ENCODE measurements at regions of chr3 and their contacts with region 1.

Region 1: DNA sequence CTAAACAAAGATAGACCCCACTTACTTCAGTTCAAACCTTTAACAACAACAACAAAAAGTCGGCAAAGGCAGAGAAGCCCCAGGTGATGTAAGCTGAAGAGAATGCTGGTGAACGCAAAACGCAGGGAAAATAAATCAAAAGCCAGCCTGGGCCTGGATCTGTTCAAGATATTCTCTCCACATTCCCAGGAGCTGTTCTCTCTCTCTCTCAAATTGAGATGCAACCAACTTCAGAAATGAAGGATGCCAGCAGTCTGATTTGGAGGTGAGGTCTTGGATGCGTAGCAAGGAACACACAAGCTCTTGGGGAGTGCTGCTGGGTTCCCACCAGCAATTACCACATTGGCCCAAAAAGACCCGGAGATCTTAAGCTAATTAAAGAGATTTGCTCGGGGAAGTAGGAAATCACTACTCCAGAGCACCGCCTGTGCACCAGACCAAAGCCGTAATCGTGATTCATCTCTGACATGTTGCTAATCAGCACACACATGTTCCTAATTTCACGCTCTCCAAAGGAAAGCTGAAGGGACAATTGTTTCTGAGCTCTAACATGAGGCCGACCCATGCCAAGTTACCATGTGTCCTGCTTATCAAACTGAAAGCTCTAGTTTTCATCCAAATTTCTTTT is 37.1 kb downstream of the IL17RD start:
- DNase-seq: no peak
- ATAC-seq: no peak
- H3K4me3 ChIP-seq: no peak overlapping the region
- H3K27ac ChIP-seq: no peak overlapping the region
- H3K4me1 ChIP-seq: no peaks in the 10 kb centered on the region
- H3K27me3 ChIP-seq: no peaks in the 10 kb centered on the region
- CTCF ChIP-seq: no peak

Region 2: GRCh38 chr3:57116501-57116900 is 11.5 kb before region 1 on chr3:
- CTCF ChIA-PET with region 1: interaction called, 10 read pairs
- POLR2A ChIA-PET with region 1: no interaction called
- in situ Hi-C with region 1: no loop called
- intact Hi-C with region 1: no loop called
- DNase-seq: no peak
- ATAC-seq: no peak
- H3K4me3 ChIP-seq: no peak overlapping the region
- H3K27ac ChIP-seq: no peak overlapping the region
- H3K4me1 ChIP-seq: no peaks in the 10 kb centered on the region
- H3K27me3 ChIP-seq: no peaks in the 10 kb centered on the region
- CTCF ChIP-seq: no peak

Region 3: DNA sequence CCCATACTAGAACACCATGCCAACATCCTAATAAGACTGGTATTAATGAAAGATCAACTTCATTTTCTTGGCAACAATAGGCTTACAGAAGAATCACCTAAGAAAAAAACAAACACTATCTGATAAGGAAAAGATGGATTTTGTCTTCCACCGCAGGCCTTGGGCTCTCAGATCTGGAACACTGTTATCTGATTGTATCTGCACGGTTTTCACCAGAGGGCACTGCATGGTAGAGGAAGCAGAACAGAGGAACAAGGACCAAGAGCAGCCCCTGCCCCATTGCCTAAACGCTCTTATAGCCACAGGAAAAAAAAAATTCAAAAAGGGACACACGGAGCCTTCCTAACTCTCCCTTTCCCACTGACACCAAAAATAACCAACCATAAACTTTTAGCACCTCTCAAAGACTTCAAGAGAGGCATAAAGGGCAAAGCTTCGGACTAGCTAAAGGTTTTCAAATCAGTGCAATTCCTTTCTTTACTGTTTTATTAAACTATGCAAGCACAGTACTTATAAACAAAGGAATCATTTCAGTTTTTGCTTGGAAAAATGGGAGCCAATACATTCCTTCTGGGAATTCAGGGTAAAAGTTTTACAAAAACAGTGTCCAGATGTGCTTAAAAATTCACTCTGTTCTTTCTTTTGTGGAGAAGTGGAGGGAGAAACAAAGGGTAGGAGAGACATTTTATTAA is 13.9 kb after region 1 on chr3:
- CTCF ChIA-PET with region 1: no interaction called
- POLR2A ChIA-PET with region 1: no interaction called
- in situ Hi-C with region 1: no loop called
- intact Hi-C with region 1: no loop called
- DNase-seq: no peak
- ATAC-seq: no peak
- H3K4me3 ChIP-seq: no peak overlapping the region
- H3K27ac ChIP-seq: no peak overlapping the region
- H3K4me1 ChIP-seq: no peaks in the 10 kb centered on the region
- H3K27me3 ChIP-seq: no peaks in the 10 kb centered on the region
- CTCF ChIP-seq: 0 out of 2 replicates have a peak, but pooled peaks have one; percentile 7